ENCODE measurements at regions of chr20 and their contacts with region 1.

Region 1: GRCh38 chr20:53001498-53002301 is 29.5 kb downstream of the TSHZ2 start:
- DNase-seq: peak; percentile 72
- H3K4me3 Mint-ChIP-seq: peak overlapping the region; percentile 80
- H3K27ac Mint-ChIP-seq: peak overlapping the region; percentile 98
- H3K4me1 Mint-ChIP-seq: peaks cover 38% of the 10 kb centered on the region
- H3K27me3 Mint-ChIP-seq: no peaks in the 10 kb centered on the region

Region 2: GRCh38 chr20:52978851-52979250 is 22.8 kb before region 1 on chr20:
- intact Hi-C with region 1: loop called (anchors 1 kb)
- DNase-seq: no peak
- H3K4me3 Mint-ChIP-seq: peak overlapping the region; percentile 46
- H3K27ac Mint-ChIP-seq: peak overlapping the region; percentile 67
- H3K4me1 Mint-ChIP-seq: peaks cover 44% of the 10 kb centered on the region
- H3K27me3 Mint-ChIP-seq: no peaks in the 10 kb centered on the region

Region 3: GRCh38 chr20:53021934-53022333 is 20.2 kb after region 1 on chr20:
- intact Hi-C with region 1: loop called (anchors 1 kb)
- DNase-seq: peak; percentile 80
- H3K4me3 Mint-ChIP-seq: peak overlapping the region; percentile 65
- H3K27ac Mint-ChIP-seq: peak overlapping the region; percentile 85
- H3K4me1 Mint-ChIP-seq: peaks cover 71% of the 10 kb centered on the region
- H3K27me3 Mint-ChIP-seq: no peaks in the 10 kb centered on the region

Region 4: DNA sequence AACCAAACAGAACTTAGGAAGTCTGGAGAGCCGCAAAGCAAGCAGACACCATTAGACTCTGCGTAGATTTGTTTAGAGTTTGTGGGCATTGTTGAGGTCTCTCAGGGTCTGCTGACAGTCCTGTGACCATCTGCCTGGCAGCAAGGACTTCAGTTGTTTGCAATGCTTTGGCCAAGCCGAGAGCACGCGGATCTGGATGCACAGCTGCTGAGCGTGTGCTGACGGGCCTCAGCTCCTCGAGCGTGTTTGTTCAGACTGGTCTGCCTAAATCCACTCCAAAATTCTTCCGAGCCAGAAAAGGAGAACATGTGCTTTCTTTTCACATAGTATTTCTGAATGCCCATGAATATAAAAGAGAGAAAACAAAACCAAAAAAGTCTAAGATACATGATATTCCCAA is 433.0 kb after region 1 on chr20:
- intact Hi-C with region 1: no loop called
- DNase-seq: no peak
- H3K4me3 Mint-ChIP-seq: no peak overlapping the region
- H3K27ac Mint-ChIP-seq: no peak overlapping the region
- H3K4me1 Mint-ChIP-seq: no peaks in the 10 kb centered on the region
- H3K27me3 Mint-ChIP-seq: no peaks in the 10 kb centered on the region

Measured in activated CD4-positive, alpha-beta T cell treated with anti-CD3 and anti-CD28 coated beads, Interleukin-2, amount 10 ng/mL, durations not matched to agents 24 days and 14 days (primary cell).